Activated naive CD4-positive, alpha-beta T cell treated with anti-CD3 and anti-CD28 coated beads for 36 hours (primary cell): ENCODE measurements at regions of chr14 and their contacts with region 1.

Region 1: GRCh38 chr14:50038398-50039119 is 77.8 kb downstream of the VCPKMT start:
- DNase-seq: peak; percentile 92
- H3K4me3 Mint-ChIP-seq: peak overlapping the region; percentile 16
- H3K27ac Mint-ChIP-seq: peak overlapping the region; percentile 91
- H3K4me1 Mint-ChIP-seq: peaks cover 46% of the 10 kb centered on the region
- H3K27me3 Mint-ChIP-seq: no peaks in the 10 kb centered on the region

Region 2: GRCh38 chr14:49862089-49862673 is 176.4 kb before region 1 on chr14:
- CTCF ChIA-PET with region 1: interaction called, 22 read pairs
- intact Hi-C with region 1: loop called (anchors 1 kb)
- DNase-seq: peak; percentile 91
- H3K4me3 Mint-ChIP-seq: no peak overlapping the region
- H3K27ac Mint-ChIP-seq: no peak overlapping the region
- H3K4me1 Mint-ChIP-seq: peaks cover 14% of the 10 kb centered on the region
- H3K27me3 Mint-ChIP-seq: peaks cover 2% of the 10 kb centered on the region

Region 3: DNA sequence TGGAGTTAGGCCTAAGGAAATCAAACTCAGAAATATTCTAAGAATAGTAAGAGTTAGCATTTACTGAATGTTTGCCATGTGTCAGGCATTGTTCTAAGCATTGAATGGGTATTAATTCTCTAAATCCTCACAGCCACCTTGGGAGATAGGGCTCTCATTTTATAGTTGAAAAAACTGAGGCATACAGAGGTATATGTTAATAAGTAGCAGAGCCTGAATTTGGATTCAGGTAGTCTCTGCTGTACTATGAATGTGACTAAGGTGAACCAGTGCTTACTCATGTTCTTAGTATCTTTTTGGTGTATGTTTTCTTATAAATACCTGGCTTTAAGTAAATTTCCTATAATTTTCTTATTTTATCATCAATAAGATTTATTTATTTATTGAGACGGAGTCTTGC is 137.6 kb before region 1 on chr14:
- CTCF ChIA-PET with region 1: interaction called, 10 read pairs
- intact Hi-C with region 1: loop called (anchors 1 kb)
- DNase-seq: no peak
- H3K4me3 Mint-ChIP-seq: no peak overlapping the region
- H3K27ac Mint-ChIP-seq: no peak overlapping the region
- H3K4me1 Mint-ChIP-seq: peaks cover 35% of the 10 kb centered on the region
- H3K27me3 Mint-ChIP-seq: no peaks in the 10 kb centered on the region

Region 4: GRCh38 chr14:49977126-49977841 is 61.3 kb before region 1 on chr14:
- CTCF ChIA-PET with region 1: interaction called, 9 read pairs
- intact Hi-C with region 1: loop called (anchors 1 kb)
- DNase-seq: peak; percentile 66
- H3K4me3 Mint-ChIP-seq: peak overlapping the region; percentile 22
- H3K27ac Mint-ChIP-seq: peak overlapping the region; percentile 83
- H3K4me1 Mint-ChIP-seq: peaks cover 85% of the 10 kb centered on the region
- H3K27me3 Mint-ChIP-seq: no peaks in the 10 kb centered on the region

Region 5: DNA sequence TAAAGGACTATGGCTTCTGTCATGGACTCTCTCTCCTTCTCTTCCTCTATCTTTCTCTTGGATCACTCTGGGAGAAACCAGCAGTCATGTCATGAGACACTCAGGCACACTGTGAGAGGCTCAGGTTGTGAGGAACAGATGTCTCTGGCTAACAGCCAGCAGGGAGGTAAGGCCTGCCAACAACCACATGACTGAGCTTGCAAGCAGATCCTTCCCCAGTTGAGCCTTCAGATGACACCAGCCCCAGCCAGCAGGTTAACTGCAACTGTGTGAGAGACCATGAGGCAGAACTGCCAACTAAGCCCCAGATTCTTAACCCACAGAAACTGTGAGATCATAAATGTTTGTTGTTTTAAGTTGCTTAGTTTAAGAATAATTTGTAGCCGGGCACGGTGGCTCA is 12.8 kb before region 1 on chr14:
- CTCF ChIA-PET with region 1: interaction called, 11 read pairs
- intact Hi-C with region 1: loop called (anchors 1 kb)
- DNase-seq: peak; percentile 41
- H3K4me3 Mint-ChIP-seq: no peak overlapping the region
- H3K27ac Mint-ChIP-seq: no peak overlapping the region
- H3K4me1 Mint-ChIP-seq: peaks cover 27% of the 10 kb centered on the region
- H3K27me3 Mint-ChIP-seq: no peaks in the 10 kb centered on the region

Region 6: DNA sequence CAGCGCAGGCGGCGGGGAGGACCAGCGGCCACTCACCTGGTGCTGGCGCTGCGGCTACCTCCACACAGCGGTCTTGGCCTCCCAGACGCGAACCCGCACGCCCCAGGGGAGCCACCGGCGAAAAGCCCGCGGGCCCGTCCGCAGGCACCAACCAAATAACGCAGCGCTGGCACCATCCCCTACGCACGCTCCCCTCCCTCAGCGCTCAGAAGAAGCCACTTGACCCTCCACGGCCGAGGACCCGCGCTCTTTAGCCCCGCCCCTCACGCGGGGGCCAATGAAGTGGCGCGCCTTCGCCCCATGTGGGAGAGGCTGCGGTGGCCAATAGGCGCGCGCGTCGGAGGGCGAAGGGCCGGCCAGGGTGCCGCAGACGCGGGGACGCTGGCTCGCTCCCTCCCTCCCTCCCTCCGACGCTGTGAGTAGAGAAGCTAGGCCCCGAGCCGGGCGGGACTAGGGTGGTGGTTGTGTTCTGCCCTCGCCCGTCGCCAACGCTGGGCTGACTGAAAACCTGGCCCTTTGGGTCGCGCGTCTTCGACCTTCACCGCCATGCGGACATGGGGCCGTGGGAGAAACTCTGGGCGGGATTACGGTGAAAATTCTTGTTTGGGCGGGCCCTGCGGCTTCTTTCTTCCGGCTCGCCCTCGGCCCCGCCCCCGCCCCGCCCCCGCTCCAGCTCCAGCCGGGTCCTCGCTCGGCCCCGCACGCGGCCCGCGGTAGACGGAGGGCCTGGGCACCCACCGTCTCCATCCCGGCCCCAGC is 273.6 kb after region 1 on chr14 and contains the starts of genes DMAC2L and L2HGDH:
- CTCF ChIA-PET with region 1: no interaction called
- intact Hi-C with region 1: loop called (anchors 2 kb)
- DNase-seq: peak; percentile 89
- H3K4me3 Mint-ChIP-seq: peak within 1 kb of the TSS; percentile 94
- H3K27ac Mint-ChIP-seq: peak within 1 kb of the TSS; percentile 95
- H3K4me1 Mint-ChIP-seq: peaks cover 41% of the 10 kb centered on the region
- H3K27me3 Mint-ChIP-seq: no peaks in the 10 kb centered on the region
- total RNA-seq, gene DMAC2L: 11.7 to 13.7 TPM
- total RNA-seq, gene L2HGDH: 13.5 to 14.3 TPM

Region 7: DNA sequence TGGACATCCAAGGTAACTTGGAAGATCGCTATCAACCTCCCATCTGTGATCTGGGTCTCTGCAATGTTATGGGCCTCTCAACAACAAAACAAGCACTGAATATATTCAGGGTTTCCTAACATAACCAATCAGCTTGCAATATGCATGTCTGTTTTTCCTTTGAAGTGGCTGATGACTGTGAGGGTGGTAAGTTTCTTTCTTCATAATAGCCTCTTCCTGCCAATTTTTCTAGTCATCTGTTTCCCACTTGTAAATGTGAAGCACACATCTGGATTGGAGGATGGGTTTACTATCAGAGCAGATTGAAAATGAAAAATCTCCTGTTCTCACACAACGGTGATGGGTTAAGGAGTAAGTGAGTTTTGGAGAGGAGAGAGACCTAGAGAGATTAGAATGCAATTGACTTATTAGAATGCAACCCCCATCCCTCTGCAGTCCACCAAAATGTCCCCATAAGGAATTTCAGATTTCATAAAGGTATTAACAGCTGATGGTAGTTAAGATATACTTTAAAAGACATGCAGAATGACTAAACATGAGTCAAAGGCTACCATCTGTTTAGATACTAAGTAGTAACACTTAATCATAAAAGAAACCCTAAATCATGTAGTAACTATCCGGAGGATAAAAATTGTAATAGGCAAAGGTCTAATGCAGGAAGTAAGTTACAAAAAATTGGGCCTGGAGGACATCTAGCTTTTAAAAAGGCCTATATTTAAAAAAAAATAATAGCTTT is 688.0 kb after region 1 on chr14:
- CTCF ChIA-PET with region 1: no interaction called
- intact Hi-C with region 1: loop called (anchors 5 kb)
- DNase-seq: peak; percentile 48
- H3K4me3 Mint-ChIP-seq: peak overlapping the region; percentile 3
- H3K27ac Mint-ChIP-seq: peak overlapping the region; percentile 83
- H3K4me1 Mint-ChIP-seq: peaks cover 28% of the 10 kb centered on the region
- H3K27me3 Mint-ChIP-seq: no peaks in the 10 kb centered on the region